Heart right ventricle (tissue), 16 donors: ENCODE measurements at regions of chr2 and their contacts with region 1.

Region 1: DNA sequence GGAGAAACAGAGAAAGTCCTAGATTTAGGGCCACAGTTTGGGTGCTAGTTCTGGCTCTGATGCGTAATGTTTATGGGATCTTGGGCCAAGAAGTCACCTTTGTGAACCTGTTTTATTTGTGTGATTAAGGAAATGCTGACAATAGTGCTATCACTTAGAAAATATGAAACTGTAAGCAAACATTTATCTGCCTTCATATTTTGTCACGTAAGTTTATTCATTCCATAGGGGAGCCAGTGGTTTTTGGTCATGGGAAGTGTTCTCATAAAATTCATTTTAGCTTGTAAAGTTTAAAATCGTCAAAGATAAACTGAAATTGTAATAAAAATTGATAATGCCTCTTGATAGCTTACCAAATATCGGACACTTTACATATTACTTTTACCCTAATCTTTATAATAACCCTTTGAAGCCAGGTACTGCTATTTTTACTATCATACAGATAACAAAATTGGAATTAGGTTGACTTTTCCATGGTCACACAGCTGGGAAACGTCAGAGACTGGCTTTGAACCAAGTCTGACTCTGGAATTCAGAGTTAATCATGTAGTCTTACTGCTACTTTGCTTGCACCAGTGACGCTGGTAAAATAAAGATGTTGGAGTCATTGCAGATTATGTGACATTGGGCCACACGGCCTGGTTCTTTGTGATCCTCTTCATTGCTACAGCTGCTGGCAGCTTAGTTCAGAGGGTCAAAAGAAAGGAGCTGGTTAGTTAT is 99.7 kb downstream of the ICA1L start:
- DNase-seq: peak in 1 of 2 donors; percentile 32
- ATAC-seq: peak in 6 of 8 donors; percentile 27 to 48 (median 41)
- H3K4me3 ChIP-seq: no peak overlapping the region
- H3K27ac ChIP-seq: no peak overlapping the region
- H3K4me1 ChIP-seq: peaks cover 0 to 7% (median 0%) of the 10 kb centered on the region in 9 donors
- H3K27me3 ChIP-seq: no peaks in the 10 kb centered on the region
- CTCF ChIP-seq: no peak

Region 2: DNA sequence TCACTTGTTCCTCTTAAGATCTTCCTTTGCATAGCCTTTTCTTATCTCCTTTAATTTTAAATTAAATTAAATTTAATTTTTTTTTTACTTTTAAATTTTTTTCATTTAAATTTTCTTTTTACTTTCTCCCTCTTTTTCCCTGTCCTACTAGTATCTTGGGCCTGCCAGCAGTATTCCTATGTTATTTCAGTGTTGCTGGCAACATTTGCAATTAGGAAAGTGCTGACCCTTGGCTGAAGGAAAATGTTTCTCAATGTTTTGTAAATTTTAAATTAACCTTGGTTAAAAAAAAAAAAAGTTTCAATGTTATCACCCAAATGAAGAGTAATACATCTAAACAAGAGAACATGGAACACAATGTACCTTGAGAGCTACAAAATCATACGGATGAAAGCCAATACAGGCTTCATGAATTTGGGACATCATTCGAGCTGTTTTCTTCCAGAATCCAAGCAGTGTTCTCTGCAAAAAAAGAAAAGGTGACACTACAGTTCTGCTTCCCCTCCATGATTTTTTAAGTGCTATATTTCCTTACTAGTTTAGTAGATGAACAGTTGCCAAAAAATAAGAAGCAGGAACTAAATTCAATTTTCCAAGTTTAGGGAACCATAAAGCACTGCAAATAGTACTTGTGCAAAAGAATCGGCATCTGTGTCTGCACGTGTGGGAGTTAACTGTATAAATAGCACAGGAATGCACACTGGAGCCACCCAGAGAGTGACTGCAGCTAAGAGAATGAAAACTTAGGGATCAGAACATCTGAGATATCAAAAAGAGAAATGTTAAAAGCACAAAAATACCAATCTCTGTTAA is 43.9 kb after region 1 on chr2:
- intact Hi-C with region 1: no loop called
- DNase-seq: no peak
- ATAC-seq: peak in 5 of 8 donors; percentile 69 to 89 (median 76)
- H3K4me3 ChIP-seq: peak overlapping the region in 1 of 10 donors; percentile 1
- H3K27ac ChIP-seq: peak overlapping the region in 5 of 10 donors; percentile 5 to 41 (median 22)
- H3K4me1 ChIP-seq: peaks cover 0 to 21% (median 11%) of the 10 kb centered on the region in 9 donors
- H3K27me3 ChIP-seq: no peaks in the 10 kb centered on the region
- CTCF ChIP-seq: no peak

Region 3: DNA sequence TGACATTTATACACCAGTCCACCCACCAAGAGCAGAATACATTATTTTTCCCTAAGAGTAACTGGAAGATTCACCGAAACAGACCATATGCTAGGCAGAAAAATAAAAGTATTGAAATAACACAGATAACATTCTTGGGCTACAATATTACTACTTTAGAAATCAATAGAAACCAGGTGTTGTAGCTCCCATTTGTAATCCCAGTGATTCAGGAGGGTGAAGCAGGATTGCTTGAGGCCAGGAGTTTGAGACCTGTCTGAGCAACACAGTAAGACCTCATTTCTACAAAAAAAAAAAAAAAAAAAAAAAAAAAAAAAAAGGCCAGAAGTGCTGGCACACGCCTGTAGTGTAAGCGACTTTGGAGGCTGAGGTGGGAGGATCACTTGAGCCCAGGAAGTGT is 90.1 kb after region 1 on chr2:
- intact Hi-C with region 1: loop called in 1 of 10 experiments (anchors 10 kb)
- DNase-seq: no peak
- ATAC-seq: no peak
- H3K4me3 ChIP-seq: no peak overlapping the region
- H3K27ac ChIP-seq: no peak overlapping the region
- H3K4me1 ChIP-seq: no peaks in the 10 kb centered on the region
- H3K27me3 ChIP-seq: no peaks in the 10 kb centered on the region
- CTCF ChIP-seq: no peak

Region 4: GRCh38 chr2:202870431-202871299 is 98.8 kb after region 1 on chr2:
- intact Hi-C with region 1: loop called in 2 of 10 experiments (anchors 10 kb)
- DNase-seq: peak; percentile 54 to 60
- ATAC-seq: peak; percentile 48 to 91 (median 86)
- H3K4me3 ChIP-seq: peak overlapping the region; percentile 32 to 98 (median 88)
- H3K27ac ChIP-seq: peak overlapping the region; percentile 14 to 86 (median 84)
- H3K4me1 ChIP-seq: peaks cover 0 to 15% (median 7%) of the 10 kb centered on the region in 9 donors
- H3K27me3 ChIP-seq: no peaks in the 10 kb centered on the region
- CTCF ChIP-seq: peak in 7 of 9 donors; percentile 33 to 61 (median 44)

Region 5: GRCh38 chr2:202911512-202912341 is 139.8 kb after region 1 on chr2 and contains the starts of genes CARF and WDR12:
- intact Hi-C with region 1: no loop called
- DNase-seq: peak; percentile 91 to 95
- ATAC-seq: peak; percentile 98 to 99 (median 98)
- H3K4me3 ChIP-seq: peak within 1 kb of the TSS; percentile 48 to 88 (median 78)
- H3K27ac ChIP-seq: peak within 1 kb of the TSS; percentile 68 to 95 (median 90)
- H3K4me1 ChIP-seq: peaks cover 2 to 29% (median 18%) of the 10 kb centered on the region in 9 donors
- H3K27me3 ChIP-seq: no peaks in the 10 kb centered on the region
- CTCF ChIP-seq: no peak
- total RNA-seq, gene CARF: 5.0 to 10.2 (median 8.4) TPM
- total RNA-seq, gene WDR12: 32.1 to 52.6 (median 45.8) TPM